ENCODE measurements at regions of chr4 and their contacts with region 1.

Region 1: DNA sequence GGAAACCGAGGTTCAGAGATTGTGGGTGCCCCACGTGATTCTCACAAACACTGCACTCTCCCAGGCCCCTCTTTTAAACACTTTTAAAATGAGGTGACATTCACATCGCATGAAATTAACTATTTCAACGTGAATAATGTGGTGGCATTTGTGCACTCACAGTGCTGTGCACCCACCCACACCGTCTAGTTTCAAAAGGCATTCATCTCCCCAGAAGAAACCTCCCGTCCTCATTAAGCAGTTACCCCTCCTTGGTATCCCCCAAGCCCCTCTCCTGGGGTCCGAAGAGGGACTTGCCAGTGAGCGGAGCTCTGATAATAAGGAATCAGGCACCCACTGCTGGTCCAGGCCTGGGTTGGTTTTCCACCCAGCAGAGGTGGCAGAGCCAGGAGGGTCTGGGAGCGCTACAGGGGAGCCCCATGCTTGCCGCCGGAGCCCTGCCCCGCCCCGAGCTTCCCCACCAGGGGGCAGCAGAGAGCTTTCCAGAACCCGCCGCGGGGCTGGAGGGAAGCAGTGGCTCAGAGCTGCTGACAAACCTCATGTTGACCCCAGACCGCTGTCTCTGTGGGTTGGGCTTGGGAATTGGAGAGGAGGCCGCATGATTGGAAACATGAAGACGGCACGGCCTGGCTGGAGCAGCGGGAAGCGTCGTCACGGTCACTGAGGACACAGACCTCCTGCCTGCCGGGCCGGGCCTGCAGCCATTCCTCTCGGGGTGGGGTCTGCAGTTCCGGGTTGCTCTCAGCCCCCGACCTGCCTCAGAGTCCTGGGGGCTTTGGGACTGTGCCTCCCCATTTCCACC is 27.5 kb upstream of the HTRA3 start:
- DNase-seq: peak; percentile 92
- ATAC-seq: peak; percentile 82 to 87

Region 2: DNA sequence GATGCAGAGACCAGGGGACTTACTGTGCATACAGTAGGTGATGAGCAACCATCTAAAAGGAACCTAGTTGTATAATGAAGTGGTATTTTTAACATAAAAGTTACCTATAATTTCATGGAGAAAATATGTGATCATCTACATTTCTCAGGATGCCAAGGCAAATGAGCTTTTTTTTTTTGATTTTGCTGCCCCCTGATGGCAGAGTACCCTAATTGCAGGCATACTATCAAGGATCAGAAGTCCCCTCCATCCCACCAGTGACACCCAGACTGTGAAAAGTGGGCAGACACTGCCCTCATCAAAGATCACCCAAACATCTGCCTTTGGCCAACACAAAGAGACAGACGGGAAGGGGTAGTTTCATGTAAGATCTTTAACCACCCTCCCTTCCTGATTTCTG is 73.9 kb before region 1 on chr4:
- intact Hi-C with region 1: loop called (anchors 10 kb)
- DNase-seq: no peak
- ATAC-seq: no peak

Region 3: DNA sequence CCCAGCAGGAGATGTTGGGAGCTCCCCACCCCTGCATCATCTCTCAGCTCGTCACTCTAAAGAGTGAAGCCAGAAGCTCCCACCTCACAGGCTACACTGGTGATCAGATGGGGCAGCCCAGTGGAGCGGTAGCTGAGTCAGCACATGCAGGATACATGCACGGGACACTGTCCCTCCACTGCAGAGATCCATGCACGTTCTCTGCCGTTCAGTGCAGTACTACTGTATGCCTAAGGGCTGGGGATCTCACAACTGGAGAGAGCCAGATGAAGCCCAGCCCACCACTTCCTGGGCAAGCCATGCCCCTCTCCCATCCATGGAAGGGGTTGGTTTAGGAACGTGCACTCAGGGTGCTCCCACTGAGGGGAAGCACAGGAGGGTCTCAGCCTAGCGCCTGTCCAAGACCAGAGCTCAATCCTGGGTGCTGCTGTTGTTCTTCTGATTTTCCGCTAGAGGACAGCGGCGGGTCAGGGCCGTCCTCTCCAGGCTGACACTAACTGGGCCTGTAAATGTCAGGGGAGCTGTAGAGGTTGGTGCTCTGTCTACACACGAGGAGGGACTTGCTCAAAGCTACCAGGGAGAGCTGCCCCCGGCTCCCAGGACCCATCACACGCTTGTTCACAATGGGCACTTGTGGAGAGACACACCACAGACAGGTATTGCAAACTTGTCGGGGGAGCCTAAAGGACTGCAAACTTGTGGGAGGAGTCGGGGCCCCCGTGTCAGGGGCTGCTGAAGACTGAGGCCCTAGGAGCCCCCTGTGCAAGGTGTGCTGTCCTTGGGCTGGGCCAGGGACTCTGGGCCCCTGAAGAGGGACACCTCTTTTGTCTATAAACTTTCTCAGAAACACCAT is 65.3 kb before region 1 on chr4:
- intact Hi-C with region 1: loop called in 1 of 2 experiments (anchors 10 kb)
- DNase-seq: peak; percentile 54
- ATAC-seq: peak; percentile 81 to 86

Region 4: DNA sequence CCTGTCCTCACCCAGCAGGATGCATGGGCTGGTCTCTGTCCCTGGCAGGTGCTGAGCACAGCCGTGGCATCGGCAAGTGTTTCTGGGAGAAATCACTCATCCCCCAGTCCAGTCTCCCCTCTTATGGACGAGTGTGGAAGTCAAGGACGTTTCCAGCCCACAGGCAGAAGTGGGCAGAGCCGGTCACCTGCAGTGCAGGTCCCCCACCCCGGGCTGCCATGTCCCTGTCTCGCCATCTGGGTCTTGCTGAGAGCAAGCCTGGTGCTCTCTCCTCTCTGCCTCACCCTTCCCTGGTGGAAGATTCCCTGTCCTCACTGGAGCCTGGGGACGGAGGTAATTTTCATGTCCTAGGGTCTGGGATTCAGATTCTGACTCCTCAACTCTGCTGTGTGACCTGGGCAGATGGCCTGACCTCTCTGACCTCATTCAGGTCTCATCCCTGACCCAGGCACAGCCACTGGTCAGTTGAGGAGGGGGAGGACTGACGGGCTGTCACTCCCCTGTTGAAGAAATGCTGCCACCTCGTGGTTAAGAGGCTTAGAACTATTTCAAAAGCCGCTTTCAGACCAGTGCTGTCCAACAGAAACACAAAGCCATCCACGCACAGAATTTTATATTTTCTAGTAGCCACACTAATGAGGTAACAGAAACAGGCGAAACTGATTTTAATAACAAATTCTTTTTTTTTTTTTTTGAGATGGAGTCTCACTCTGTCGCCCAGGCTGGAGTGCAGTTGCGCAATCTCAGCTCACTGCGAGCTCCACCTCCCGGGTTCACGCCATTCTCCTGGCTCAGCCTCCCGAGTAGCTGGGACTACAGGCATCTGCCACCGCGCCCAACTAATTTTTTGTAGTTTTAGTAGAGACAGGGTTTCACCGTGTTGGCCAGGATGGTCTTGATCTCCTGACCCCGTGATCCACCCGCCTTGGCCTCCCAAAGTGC is 352.3 kb after region 1 on chr4:
- intact Hi-C with region 1: loop called (anchors 5 to 10 kb)
- DNase-seq: peak; percentile 43
- ATAC-seq: peak; percentile 67 to 75